ENCODE measurements at regions of chr11 and their contacts with region 1.

Region 1: GRCh38 chr11:65817835-65818742 is 15.7 kb upstream of the SNX32 start:
- DNase-seq: peak; percentile 96 to 100
- ATAC-seq: peak; percentile 97
- H3K4me3 ChIP-seq: peak overlapping the region; percentile 71 to 94
- H3K27ac ChIP-seq: no peak overlapping the region
- H3K4me1 ChIP-seq: no peaks in the 10 kb centered on the region
- H3K27me3 ChIP-seq: no peaks in the 10 kb centered on the region

Region 2: GRCh38 chr11:65180877-65181568 is 637.1 kb before region 1 on chr11:
- intact Hi-C with region 1: no loop called
- DNase-seq: peak; percentile 70 to 88
- ATAC-seq: peak; percentile 70
- H3K4me3 ChIP-seq: peak overlapping the region; percentile 81 to 92
- H3K27ac ChIP-seq: no peak overlapping the region
- H3K4me1 ChIP-seq: no peaks in the 10 kb centered on the region
- H3K27me3 ChIP-seq: no peaks in the 10 kb centered on the region

Region 3: DNA sequence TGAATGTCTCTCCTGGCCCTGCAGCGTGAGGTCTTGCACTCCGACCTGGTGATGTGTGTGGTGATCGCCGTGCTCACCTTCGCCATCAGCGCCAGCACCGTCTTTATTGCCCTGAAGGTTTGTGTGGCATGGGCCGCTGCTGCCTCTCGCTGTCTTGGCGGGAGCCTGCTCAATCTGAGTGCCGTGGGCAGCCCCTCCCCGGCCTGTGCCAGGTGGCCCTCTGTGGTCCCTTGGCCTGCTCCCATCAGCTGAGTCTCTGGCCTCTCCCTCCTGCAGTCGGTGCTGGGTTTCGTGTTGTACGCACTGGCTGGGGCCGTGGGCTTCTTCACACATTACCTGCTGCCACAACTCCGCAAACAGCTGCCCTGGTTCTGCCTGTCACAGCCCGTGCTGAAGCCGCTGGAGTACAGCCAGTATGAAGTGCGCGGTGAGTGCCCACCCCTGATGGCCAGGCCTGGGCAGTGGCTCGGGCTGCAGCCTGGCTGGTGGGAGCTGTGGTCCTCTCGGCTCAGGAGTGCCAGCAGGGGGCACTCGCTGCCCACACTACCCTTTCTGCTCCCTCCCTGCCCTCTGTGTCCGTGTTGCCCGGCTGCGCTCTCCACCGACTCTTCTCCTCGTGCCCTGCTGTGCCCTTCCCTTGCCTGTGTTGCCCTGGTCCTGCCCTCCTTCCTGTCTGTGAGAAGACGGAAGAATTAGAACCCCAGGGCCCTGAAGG is 192.3 kb before region 1 on chr11:
- intact Hi-C with region 1: loop called in 1 of 2 experiments (anchors 10 kb)
- DNase-seq: no peak
- ATAC-seq: peak; percentile 59
- H3K4me3 ChIP-seq: no peak overlapping the region
- H3K27ac ChIP-seq: no peak overlapping the region
- H3K4me1 ChIP-seq: no peaks in the 10 kb centered on the region
- H3K27me3 ChIP-seq: no peaks in the 10 kb centered on the region

Region 4: DNA sequence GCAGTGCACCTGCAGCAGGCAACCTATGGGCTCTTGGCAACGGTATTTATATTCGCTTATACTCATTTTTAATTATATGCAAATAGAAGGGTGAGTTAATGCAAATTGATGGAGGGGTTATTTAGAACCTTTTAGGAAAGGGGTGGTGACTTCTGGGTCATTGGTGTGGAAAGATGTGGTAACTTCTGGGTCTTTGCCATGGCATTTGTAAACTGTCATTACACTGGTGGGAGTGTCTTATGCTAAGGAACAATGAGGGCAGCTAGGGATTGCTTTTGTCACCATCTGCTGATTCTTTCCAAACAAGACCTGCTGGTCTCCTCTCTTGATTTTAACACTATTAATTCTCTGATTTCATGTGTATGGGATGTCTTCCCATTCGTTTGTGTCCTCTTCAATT is 117.7 kb before region 1 on chr11:
- intact Hi-C with region 1: loop called in 1 of 2 experiments (anchors 2 kb)
- DNase-seq: no peak
- ATAC-seq: no peak
- H3K4me3 ChIP-seq: no peak overlapping the region
- H3K27ac ChIP-seq: no peak overlapping the region
- H3K4me1 ChIP-seq: no peaks in the 10 kb centered on the region
- H3K27me3 ChIP-seq: no peaks in the 10 kb centered on the region

Region 5: GRCh38 chr11:65779851-65780577 is 38.1 kb before region 1 on chr11:
- intact Hi-C with region 1: loop called (anchors 2 to 5 kb)
- DNase-seq: peak; percentile 86 to 93
- ATAC-seq: peak; percentile 87
- H3K4me3 ChIP-seq: peak overlapping the region; percentile 84 to 87
- H3K27ac ChIP-seq: no peak overlapping the region
- H3K4me1 ChIP-seq: no peaks in the 10 kb centered on the region
- H3K27me3 ChIP-seq: no peaks in the 10 kb centered on the region

Region 6: DNA sequence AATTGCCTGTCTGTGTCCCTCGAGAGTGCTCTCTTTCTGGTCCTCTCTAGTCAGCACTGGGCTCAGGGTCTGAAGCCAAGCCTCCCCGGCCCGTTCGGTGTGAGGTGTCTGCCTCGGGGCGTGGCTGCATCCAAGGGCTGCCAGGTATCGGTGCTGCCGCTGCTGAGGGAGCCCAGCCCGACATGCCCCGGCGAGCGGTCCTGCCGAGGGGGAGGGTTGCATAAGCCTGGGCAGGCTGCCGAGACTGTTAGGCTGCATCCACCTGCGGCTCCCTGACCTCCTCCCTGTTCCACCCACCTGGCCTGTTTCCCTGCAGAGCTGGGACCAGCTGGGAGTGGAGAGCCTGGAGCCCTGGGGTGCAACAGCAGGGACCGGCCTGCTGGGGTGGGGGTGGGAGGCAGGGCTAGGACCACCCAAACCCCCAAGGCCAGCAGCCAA is 24.9 kb before region 1 on chr11:
- intact Hi-C with region 1: no loop called
- DNase-seq: no peak
- ATAC-seq: no peak
- H3K4me3 ChIP-seq: no peak overlapping the region
- H3K27ac ChIP-seq: no peak overlapping the region
- H3K4me1 ChIP-seq: no peaks in the 10 kb centered on the region
- H3K27me3 ChIP-seq: no peaks in the 10 kb centered on the region

Region 7: DNA sequence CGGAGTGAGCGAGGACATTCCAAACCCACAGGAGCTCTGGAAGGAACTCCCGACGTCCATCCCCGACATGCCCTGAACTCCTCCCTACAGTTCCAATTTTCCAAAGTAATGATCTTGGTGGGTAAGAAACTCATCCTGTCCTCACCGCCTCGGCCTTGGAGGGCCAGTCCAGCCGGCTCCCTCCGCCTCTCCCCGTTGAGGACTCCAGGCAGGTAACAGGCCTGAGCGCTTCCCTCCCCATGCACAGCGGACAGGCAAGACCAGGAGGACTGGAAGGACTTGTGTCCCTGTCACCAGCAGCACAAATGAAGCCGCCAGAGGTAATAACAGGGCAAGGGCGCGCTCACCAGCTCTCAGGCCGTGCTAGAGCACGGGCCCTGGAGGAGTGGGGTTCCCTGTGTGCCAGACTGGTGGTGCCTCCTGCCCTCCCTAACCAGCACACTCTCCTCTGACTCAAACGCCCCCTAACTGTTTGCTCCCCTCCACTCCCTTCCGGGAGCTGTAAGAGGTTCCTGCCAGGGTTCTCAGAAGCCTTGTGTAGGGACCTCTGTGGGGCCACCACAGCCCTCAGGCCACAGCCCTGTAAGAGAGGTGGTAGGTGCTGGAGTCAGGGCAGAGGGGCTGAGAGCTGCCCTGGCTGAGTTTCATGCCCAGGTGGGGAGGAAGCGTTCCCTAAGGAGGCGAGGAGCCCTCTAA is 14.1 kb before region 1 on chr11:
- intact Hi-C with region 1: no loop called
- DNase-seq: no peak
- ATAC-seq: no peak
- H3K4me3 ChIP-seq: no peak overlapping the region
- H3K27ac ChIP-seq: no peak overlapping the region
- H3K4me1 ChIP-seq: no peaks in the 10 kb centered on the region
- H3K27me3 ChIP-seq: no peaks in the 10 kb centered on the region